K562 (cell line): ENCODE measurements at regions of chr15 and their contacts with region 1.

Region 1: DNA sequence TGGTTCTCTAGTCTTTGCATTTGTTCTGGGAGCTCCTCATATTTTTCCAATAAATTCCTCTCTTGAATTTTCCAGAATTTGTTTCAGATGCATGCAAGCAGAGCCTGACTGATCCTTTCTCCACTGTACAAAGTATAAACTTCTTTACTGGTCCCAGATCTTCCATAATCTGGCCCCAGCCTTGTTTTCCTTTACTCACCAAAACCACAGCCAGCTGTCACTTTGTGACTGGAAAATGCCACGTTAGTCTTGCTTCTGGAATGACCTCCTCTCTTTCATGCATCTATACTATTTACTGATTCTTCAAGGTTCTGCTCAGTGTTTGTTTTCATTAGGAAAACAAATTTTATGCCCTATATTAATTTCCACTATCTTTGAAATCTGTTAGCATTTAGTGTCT is 60.4 kb upstream of the SPPL2A start:
- DNase-seq: no peak
- ATAC-seq: no peak
- H3K4me3 ChIP-seq: no peak overlapping the region
- H3K27ac ChIP-seq: no peak overlapping the region
- H3K4me1 ChIP-seq: no peaks in the 10 kb centered on the region; a peak in 1 of 5 replicates
- H3K27me3 ChIP-seq: peaks cover 2 to 5% of the 10 kb centered on the region in 2 experiments; a peak in 2 of 5 replicates
- CTCF ChIP-seq: no peak
- EP300 ChIP-seq: no peak
- POLR2A ChIP-seq: no peak
- RAD21 ChIP-seq: no peak

Region 2: DNA sequence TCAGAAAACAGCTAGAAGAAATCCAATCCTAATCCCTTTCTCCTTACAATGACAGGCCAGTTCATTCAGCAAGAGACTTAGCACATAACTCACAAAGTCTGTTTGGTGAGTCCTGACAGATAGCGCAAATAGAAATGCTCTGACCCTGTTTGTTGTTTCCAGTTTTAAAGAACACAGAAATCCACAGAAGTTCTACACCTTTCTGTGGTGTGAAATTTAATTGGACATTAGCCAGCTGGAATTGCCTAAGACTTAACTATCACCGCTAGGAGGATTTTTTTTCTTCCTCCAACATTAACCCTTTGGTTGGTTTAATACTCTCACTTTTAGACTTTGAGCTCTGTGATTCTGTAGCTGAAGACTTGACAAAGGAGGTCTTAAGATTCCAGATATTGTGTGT is 591.2 kb before region 1 on chr15:
- CTCF ChIA-PET with region 1: no interaction called
- POLR2A ChIA-PET with region 1: no interaction called
- in situ Hi-C with region 1: no loop called
- intact Hi-C with region 1: loop called (anchors 5 kb)
- DNase-seq: no peak
- ATAC-seq: peak; percentile 25; the same call in 1 of the 3 replicates
- H3K4me3 ChIP-seq: no peak overlapping the region
- H3K27ac ChIP-seq: no peak overlapping the region
- H3K4me1 ChIP-seq: peaks cover 0 to 18% of the 10 kb centered on the region in 2 experiments; a peak in 2 of 5 replicates
- H3K27me3 ChIP-seq: no peaks in the 10 kb centered on the region
- CTCF ChIP-seq: peak in 1 of 3 experiments; percentile 16; a peak in 1 of 6 replicates
- EP300 ChIP-seq: no peak
- POLR2A ChIP-seq: no peak
- RAD21 ChIP-seq: no peak

Region 3: GRCh38 chr15:50390554-50391287 is 435.2 kb before region 1 on chr15:
- CTCF ChIA-PET with region 1: no interaction called
- POLR2A ChIA-PET with region 1: no interaction called
- in situ Hi-C with region 1: no loop called
- intact Hi-C with region 1: no loop called
- DNase-seq: peak in 1 of 4 experiments; percentile 21
- ATAC-seq: peak; percentile 80
- H3K4me3 ChIP-seq: no peak overlapping the region
- H3K27ac ChIP-seq: peak overlapping the region; percentile 64
- H3K4me1 ChIP-seq: peaks cover 0 to 10% of the 10 kb centered on the region in 2 experiments; a peak in 3 of 5 replicates
- H3K27me3 ChIP-seq: no peaks in the 10 kb centered on the region
- CTCF ChIP-seq: no peak
- EP300 ChIP-seq: no peak
- POLR2A ChIP-seq: no peak
- RAD21 ChIP-seq: no peak

Region 4: GRCh38 chr15:50675536-50676144 is 150.3 kb before region 1 on chr15:
- CTCF ChIA-PET with region 1: no interaction called
- POLR2A ChIA-PET with region 1: no interaction called
- in situ Hi-C with region 1: no loop called
- intact Hi-C with region 1: no loop called
- DNase-seq: peak in 1 of 4 experiments; percentile 27
- ATAC-seq: no peak
- H3K4me3 ChIP-seq: no peak overlapping the region
- H3K27ac ChIP-seq: no peak overlapping the region
- H3K4me1 ChIP-seq: peaks cover 7 to 12% of the 10 kb centered on the region in 2 experiments; a peak in 4 of 5 replicates
- H3K27me3 ChIP-seq: no peaks in the 10 kb centered on the region
- CTCF ChIP-seq: peak; percentile 48 to 77 (median 50); a peak in 4 of 6 replicates
- EP300 ChIP-seq: no peak
- POLR2A ChIP-seq: no peak
- RAD21 ChIP-seq: peak; percentile 56 to 77

Region 5: DNA sequence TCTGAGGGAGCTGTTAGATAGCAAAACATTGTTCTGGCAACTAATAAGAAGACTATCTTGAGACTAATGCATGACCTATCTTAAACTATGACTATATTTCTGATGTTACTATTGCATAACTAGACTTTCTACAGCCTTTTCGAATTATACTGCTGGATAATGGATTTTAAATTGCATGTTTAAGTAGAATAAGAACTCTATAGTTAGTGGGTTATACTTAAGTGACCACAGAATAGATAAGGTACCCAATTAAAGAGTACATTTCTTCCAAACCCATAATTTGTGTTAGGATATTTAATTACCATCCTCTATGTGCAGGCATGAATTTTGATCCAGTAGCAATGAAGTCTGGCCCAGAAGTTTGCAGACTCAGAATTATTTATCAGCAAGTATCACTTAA is 15.8 kb before region 1 on chr15:
- CTCF ChIA-PET with region 1: no interaction called
- POLR2A ChIA-PET with region 1: interaction called, 10 read pairs
- in situ Hi-C with region 1: no loop called
- intact Hi-C with region 1: no loop called
- DNase-seq: no peak
- ATAC-seq: no peak
- H3K4me3 ChIP-seq: no peak overlapping the region
- H3K27ac ChIP-seq: no peak overlapping the region
- H3K4me1 ChIP-seq: no peaks in the 10 kb centered on the region
- H3K27me3 ChIP-seq: peaks cover 0 to 10% of the 10 kb centered on the region in 2 experiments; a peak in 4 of 5 replicates
- CTCF ChIP-seq: no peak
- EP300 ChIP-seq: no peak
- POLR2A ChIP-seq: no peak
- RAD21 ChIP-seq: no peak